Thyroid gland (tissue), 4 donors: ENCODE measurements at regions of chr18 and their contacts with region 1.

Region 1: DNA sequence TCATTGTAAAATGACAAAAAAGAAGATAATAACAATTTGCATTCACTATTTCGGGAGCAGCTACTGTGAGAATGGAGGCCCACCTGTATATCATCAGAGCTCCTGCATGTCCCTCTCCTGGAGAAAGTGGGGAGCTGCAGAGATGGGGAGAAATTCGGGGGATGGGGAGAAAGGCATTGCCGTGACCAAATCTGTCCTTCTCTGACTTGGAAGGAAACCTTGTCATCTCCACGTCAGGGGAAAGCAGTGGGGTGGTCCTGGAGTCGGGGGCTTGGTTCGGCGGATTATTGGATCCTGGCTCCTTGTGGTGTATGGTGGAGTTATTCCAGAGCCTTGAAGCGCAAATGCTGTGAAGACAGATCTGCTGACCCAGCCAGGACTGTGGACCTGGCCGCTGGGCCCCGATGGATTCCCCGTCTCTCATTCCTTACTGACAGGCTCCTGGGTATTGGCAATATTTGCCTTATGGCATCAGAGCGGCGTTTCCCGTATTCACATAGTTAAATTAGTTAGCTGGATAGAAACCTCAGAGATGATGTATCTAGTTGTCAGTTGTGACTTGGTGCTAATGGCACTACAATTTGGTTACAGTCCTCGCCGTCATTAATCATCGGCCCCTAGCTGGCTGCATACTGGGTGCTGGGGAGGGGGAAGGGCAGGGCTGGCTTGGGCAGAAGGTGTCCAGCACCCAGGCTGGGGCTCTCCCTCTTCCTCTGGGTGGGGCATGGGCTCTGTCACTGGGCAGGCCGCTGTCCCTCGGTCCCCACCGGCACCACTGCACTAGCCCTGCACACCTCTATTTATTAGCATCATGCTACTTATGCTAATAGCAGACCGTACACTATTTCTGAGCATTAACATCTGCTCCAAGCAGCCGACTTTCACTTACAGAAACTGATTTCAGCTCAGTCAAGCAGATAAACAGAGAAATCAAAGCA is 31.7 kb downstream of the CELF4 start:
- DNase-seq: no peak
- H3K4me3 ChIP-seq: no peak overlapping the region
- H3K27ac ChIP-seq: no peak overlapping the region
- H3K4me1 ChIP-seq: no peaks in the 10 kb centered on the region
- H3K27me3 ChIP-seq: no peaks in the 10 kb centered on the region
- CTCF ChIP-seq: no peak
- POLR2A ChIP-seq: no peak

Region 2: DNA sequence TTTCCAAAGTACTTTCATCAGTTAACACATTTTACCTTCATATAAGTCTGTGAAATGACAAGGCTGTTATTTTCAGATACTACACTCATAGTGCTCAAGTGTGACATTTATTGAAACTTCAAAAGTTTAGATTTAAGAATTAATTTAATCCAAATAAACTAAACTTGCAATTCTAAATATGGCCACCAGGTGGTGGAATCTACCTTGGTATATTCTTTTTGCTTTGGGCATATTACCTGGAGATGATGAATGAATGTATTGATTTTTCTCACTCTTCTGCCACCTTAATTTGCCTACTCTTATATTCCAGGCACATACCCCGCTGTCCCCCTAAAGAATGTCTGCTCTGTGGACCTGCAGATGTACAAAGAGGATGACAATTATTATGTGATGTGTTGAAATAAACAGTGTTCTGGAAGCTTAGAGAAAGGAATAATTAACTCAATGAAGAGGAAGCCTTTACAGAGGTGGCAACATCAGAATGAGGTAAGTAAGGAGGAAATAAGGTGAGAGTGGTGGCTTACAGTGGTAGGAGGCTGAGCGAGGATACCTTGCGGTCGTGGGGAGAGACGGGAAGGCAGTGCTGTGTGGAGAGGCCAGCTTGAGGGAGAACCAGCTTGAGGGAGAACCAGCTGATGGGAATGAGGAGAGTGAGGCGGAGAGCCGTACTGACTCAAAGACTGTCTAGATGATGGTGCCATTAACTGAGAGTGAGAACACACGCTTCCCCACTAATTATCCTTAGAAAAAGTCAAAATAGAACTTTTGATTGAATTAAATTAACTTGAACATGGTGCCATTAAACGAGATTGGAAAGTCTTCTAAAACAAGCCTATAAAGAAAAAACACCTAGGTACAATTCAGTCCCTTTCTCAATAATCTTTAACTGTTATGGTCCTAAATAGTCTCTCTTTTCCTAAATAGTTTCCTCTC is 147.8 kb before region 1 on chr18:
- intact Hi-C with region 1: loop called (anchors 2 kb)
- DNase-seq: no peak
- H3K4me3 ChIP-seq: no peak overlapping the region
- H3K27ac ChIP-seq: no peak overlapping the region
- H3K4me1 ChIP-seq: no peaks in the 10 kb centered on the region
- H3K27me3 ChIP-seq: no peaks in the 10 kb centered on the region
- CTCF ChIP-seq: peak; percentile 44 to 80 (median 66)
- POLR2A ChIP-seq: no peak

Region 3: GRCh38 chr18:37742436-37742835 is 208.5 kb after region 1 on chr18:
- intact Hi-C with region 1: no loop called
- DNase-seq: no peak
- H3K4me3 ChIP-seq: no peak overlapping the region
- H3K27ac ChIP-seq: no peak overlapping the region
- H3K4me1 ChIP-seq: no peaks in the 10 kb centered on the region
- H3K27me3 ChIP-seq: no peaks in the 10 kb centered on the region
- CTCF ChIP-seq: no peak
- POLR2A ChIP-seq: no peak